Tibial artery (tissue), 4 donors: ENCODE measurements at regions of chr3 and their contacts with region 1.

Region 1: GRCh38 chr3:72447059-72447946 is 400.9 kb downstream of the SHQ1 start:
- DNase-seq: peak; percentile 86 to 95
- H3K4me3 ChIP-seq: peak overlapping the region; percentile 68 to 89
- H3K27ac ChIP-seq: peak overlapping the region; percentile 79 to 91
- H3K4me1 ChIP-seq: peaks cover 0 to 28% (median 4%) of the 10 kb centered on the region in 4 donors
- H3K27me3 ChIP-seq: no peaks in the 10 kb centered on the region
- CTCF ChIP-seq: peak in 1 of 2 experiments; percentile 26

Region 2: DNA sequence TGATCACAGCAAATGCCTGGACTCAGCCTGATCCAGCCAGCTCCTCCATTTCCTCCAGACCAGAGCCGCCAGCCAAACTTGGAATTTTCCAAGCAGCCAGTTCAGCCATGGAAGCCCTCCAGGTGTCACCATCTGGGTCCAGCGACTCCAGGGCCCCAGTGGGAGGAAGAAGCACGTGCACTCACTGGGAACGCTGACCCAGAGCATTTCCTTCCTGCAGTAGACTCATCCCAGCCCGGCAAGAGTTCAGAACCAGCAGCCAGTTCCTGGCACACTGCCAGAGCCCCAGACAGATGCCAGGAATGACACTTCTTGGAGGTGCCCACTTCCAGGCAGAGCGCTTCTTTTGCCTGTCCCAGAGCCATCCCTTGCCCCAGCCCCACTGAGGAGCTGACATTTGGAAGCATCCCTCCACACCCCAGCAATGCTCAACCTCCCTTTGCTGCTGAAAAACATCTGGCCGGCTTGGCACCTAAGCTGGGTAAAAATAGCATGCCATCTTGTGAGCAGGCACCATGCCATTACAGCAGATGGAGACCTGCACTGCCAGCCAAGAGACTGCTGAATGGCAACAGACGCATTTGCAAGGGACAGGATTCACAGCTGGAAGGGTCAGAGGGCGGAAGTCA is 202.0 kb before region 1 on chr3:
- intact Hi-C with region 1: loop called (anchors 10 kb)
- DNase-seq: peak; percentile 68 to 92
- H3K4me3 ChIP-seq: no peak overlapping the region
- H3K27ac ChIP-seq: peak overlapping the region; percentile 73 to 79
- H3K4me1 ChIP-seq: peaks cover 0 to 73% (median 59%) of the 10 kb centered on the region in 4 donors
- H3K27me3 ChIP-seq: no peaks in the 10 kb centered on the region
- CTCF ChIP-seq: peak in 1 of 2 experiments; percentile 20